ENCODE measurements at regions of chr1 and their contacts with region 1.

Region 1: GRCh38 chr1:32870615-32871363 is at the start of gene FNDC5:
- DNase-seq: peak; percentile 58
- H3K4me3 Mint-ChIP-seq: peak within 1 kb of the TSS; percentile 68
- H3K27ac Mint-ChIP-seq: no peak within 1 kb of the TSS
- H3K4me1 Mint-ChIP-seq: peaks cover 3% of the 10 kb centered on the region
- H3K27me3 Mint-ChIP-seq: peaks cover 47% of the 10 kb centered on the region
- total RNA-seq, gene FNDC5: not detected in 2 replicates

Region 2: DNA sequence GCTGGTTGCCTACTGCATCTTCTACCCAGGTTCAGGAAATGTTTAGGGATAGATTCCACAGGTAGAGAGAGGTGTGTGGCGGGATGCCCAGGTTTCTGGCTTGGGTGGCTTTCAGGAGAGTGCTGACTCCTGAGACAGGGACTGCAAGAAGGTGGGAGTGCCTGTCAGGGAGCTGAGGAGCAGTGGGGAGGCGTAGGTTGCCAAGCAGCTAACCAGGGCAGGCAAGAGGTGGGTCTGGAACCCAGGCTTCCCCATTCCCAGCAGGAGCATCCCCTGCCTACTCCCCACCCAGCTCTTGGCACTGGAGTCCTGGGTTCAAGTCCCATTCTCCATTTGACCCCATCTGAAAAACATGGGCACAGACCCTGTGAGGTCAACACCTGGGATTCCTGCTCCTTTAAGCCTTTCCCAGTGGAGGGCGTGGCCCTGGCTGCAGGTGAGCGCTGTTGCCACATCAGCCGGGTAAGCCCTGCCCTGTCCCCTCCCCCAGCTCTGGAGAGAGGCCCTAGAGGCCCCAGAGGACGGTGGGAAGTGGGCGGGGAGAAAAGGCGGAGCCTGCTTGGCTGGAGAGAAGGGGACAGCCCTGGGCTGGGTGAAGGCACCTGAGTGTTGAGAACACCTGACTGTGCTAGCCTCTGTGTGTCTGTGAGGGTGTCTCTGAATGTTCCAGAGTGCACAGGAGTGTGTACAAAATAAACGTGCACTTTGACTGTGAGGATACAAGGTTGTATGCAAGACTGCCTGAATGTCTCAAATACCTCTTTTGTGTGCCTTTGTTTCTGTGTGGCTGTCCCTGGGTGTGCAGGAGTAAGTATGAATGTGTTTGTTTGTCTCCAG is 154.3 kb before region 1 on chr1:
- intact Hi-C with region 1: loop called (anchors 1 kb)
- DNase-seq: peak; percentile 91
- H3K4me3 Mint-ChIP-seq: no peak overlapping the region
- H3K27ac Mint-ChIP-seq: no peak overlapping the region
- H3K4me1 Mint-ChIP-seq: peaks cover 6% of the 10 kb centered on the region
- H3K27me3 Mint-ChIP-seq: peaks cover 3% of the 10 kb centered on the region

Region 3: GRCh38 chr1:32830092-32830852 is 40.5 kb before region 1 on chr1:
- intact Hi-C with region 1: loop called (anchors 5 kb)
- DNase-seq: no peak
- H3K4me3 Mint-ChIP-seq: no peak overlapping the region
- H3K27ac Mint-ChIP-seq: peak overlapping the region; percentile 16
- H3K4me1 Mint-ChIP-seq: peaks cover 8% of the 10 kb centered on the region
- H3K27me3 Mint-ChIP-seq: no peaks in the 10 kb centered on the region

Region 4: GRCh38 chr1:32859915-32860314 is 10.9 kb before region 1 on chr1:
- intact Hi-C with region 1: no loop called
- DNase-seq: no peak
- H3K4me3 Mint-ChIP-seq: no peak overlapping the region
- H3K27ac Mint-ChIP-seq: no peak overlapping the region
- H3K4me1 Mint-ChIP-seq: no peaks in the 10 kb centered on the region
- H3K27me3 Mint-ChIP-seq: no peaks in the 10 kb centered on the region

Measured in activated CD4-positive, alpha-beta T cell treated with anti-CD3 and anti-CD28 coated beads, Interleukin-2, amount 10 ng/mL, durations not matched to agents 24 days and 14 days (primary cell).